AG04450 (cell line): ENCODE measurements at regions of chr18 and their contacts with region 1.

Region 1: DNA sequence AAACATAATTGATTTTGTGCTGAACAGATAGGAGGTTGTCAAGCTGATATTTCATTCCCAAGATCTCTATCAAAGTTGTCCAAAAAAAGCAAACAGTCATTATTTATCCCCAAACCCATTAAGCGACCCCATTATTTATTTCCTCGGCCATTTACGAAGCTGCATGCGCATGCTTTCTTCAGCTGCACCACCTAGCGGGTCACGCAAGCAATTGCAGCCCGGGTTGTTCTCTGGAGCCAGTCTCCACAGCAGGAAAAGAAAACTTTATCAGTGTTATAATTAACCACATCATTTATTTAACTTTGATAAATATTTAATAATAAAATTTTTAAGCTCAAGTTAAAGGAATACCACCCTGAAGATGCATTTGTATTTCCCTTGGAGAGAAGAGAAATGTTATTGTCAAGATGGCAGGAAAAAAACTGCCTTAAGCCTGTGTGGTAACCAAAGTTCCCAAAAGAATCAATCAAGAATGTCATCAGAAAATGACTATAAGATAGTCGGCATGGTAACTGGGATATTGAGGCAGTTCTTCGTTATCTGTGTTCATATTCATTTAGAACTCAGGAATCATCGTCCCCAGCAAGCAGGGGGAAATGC is 304.7 kb downstream of the FBXO15 start:
- DNase-seq: peak; percentile 23
- H3K4me3 ChIP-seq: no peak overlapping the region
- H3K27ac ChIP-seq: no peak overlapping the region
- H3K27me3 ChIP-seq: no peaks in the 10 kb centered on the region
- CTCF ChIP-seq: peak; percentile 99

Region 2: DNA sequence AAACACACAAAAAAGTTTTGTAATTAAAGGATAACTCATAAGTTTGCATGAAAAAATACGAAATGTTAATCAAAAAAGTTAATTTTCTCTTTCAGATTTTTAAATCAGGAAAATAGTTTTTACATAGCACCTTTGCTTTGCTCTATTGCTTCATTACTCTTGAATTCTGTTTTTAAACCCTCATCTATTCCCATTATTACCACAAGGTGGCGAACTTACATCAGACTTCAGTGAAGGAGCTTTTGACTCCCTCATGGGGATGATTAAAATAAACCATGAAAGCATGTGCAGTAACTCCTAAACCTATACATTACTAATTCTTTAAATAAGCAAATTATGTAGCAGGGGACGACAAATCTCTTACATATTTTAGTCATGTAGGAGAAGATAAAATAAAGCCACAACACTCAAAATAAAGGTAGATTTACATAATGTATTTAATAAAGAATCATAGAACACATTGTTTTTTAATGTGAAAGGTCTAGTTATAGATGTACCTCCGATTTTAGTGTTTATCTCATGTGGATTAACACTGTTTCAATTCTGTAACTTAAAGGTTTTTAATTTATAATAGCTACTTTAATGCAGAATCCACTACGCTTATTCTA is 1080.3 kb before region 1 on chr18:
- CTCF ChIA-PET with region 1: interaction called, 16 read pairs
- POLR2A ChIA-PET with region 1: no interaction called
- DNase-seq: peak; percentile 59
- H3K4me3 ChIP-seq: no peak overlapping the region
- H3K27ac ChIP-seq: no peak overlapping the region
- H3K27me3 ChIP-seq: no peaks in the 10 kb centered on the region
- CTCF ChIP-seq: peak; percentile 77

Region 3: DNA sequence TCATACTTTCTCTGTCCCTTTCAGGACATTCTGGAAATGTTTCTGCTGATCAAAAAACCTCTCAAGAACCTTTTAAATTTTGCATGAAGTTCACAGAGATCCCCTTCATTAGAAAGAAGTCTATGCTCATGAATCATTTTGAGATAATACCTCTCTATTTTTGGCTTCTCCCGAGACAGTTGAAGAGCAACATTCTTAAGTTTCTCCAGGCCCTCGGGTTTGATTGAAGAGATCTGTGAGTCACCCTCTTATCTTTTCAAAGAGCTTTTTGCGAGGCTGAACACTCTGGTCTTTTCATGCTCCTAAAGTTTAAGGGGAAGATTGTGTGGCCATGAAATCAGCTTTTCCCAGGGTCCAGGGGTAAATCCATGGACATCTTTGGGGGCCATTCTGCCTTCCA is 49.5 kb before region 1 on chr18:
- CTCF ChIA-PET with region 1: interaction called, 12 read pairs
- POLR2A ChIA-PET with region 1: no interaction called
- DNase-seq: peak; percentile 2
- H3K4me3 ChIP-seq: no peak overlapping the region
- H3K27ac ChIP-seq: no peak overlapping the region
- H3K27me3 ChIP-seq: no peaks in the 10 kb centered on the region
- CTCF ChIP-seq: no peak

Region 4: DNA sequence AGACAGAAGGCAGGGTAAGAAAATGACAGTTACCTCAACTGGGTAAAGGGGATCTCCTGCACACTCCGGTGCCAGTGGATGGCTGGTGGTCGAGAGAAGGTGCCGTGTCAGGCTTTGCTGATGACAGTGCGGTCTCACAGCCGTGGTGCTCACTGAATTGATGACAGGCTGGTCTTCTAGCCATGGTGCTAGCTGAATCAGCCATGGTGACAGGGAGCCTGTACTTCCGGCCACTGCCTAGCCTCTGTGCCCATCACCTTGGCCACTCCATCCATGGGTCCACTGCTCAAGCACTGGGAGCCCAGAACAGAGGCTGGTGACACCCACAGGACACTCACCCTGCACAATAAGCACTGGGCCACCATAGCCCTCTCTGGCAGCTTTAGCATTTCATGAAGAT is 11.2 kb before region 1 on chr18:
- CTCF ChIA-PET with region 1: interaction called, 19 read pairs
- POLR2A ChIA-PET with region 1: no interaction called
- DNase-seq: no peak
- H3K4me3 ChIP-seq: no peak overlapping the region
- H3K27ac ChIP-seq: no peak overlapping the region
- H3K27me3 ChIP-seq: no peaks in the 10 kb centered on the region
- CTCF ChIP-seq: no peak

Region 5: DNA sequence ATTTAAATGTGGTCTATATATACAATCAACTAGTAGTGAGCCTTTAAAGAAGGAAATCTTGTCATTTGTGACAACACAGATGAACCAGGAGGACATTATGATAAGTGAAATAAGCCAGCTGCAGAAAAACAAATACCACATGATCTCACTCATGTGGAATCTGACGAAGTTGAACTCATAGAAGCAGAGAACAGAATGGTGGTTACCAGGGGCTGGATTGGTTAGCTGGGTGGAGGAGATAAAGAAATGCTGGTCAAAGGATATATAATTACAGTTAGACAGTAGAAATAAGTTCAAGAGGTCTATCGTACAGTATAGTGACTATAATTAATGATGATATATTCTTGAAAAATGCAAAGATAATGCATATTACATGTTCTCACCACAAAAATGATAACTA is 36.9 kb after region 1 on chr18:
- CTCF ChIA-PET with region 1: interaction called, 11 read pairs
- POLR2A ChIA-PET with region 1: no interaction called
- DNase-seq: peak; percentile 16
- H3K4me3 ChIP-seq: no peak overlapping the region
- H3K27ac ChIP-seq: no peak overlapping the region
- H3K27me3 ChIP-seq: no peaks in the 10 kb centered on the region
- CTCF ChIP-seq: no peak

Region 6: DNA sequence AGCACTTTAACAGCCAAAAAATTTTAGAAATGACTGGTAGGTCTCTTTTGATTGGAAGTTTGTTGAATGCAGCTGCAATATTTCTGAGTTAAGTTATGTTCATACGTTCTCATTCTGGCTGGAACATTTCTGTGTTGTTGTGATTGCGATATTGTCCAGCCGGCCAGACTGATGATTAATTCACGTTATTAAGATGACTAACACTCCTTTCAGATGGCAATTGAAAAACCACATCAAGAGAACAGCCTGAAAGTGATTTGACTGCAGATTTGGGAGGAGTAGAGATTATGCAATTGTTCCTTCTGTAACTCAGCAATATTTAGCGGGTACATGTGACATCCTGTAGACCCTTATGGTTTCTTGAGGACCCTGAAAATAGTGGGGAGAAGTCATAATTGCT is 171.1 kb after region 1 on chr18:
- CTCF ChIA-PET with region 1: no interaction called
- POLR2A ChIA-PET with region 1: no interaction called
- DNase-seq: peak; percentile 18
- H3K4me3 ChIP-seq: no peak overlapping the region
- H3K27ac ChIP-seq: no peak overlapping the region
- H3K27me3 ChIP-seq: peaks cover 29% of the 10 kb centered on the region
- CTCF ChIP-seq: no peak

Region 7: DNA sequence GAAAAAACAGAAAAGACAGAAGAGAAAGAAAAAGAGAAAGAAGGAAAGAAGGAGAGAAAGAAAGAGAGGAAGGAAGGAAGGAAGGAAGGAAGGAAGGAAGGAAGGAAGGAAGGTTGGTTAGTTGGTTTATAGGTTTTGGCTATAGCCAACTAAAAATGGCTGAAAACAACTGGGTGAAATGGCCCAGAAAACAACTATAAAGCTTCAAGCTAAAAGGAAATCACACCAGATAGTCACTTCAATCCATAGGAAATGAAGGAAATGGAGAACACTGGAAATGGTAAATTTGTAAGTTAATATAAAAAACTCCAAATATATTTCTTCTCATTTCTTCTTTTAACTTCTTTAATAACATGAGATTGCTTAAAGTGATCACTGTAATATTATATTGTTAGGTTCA is 186.3 kb after region 1 on chr18:
- CTCF ChIA-PET with region 1: no interaction called
- POLR2A ChIA-PET with region 1: no interaction called
- DNase-seq: no peak
- H3K4me3 ChIP-seq: no peak overlapping the region
- H3K27ac ChIP-seq: no peak overlapping the region
- H3K27me3 ChIP-seq: peaks cover 4% of the 10 kb centered on the region
- CTCF ChIP-seq: no peak

Region 8: DNA sequence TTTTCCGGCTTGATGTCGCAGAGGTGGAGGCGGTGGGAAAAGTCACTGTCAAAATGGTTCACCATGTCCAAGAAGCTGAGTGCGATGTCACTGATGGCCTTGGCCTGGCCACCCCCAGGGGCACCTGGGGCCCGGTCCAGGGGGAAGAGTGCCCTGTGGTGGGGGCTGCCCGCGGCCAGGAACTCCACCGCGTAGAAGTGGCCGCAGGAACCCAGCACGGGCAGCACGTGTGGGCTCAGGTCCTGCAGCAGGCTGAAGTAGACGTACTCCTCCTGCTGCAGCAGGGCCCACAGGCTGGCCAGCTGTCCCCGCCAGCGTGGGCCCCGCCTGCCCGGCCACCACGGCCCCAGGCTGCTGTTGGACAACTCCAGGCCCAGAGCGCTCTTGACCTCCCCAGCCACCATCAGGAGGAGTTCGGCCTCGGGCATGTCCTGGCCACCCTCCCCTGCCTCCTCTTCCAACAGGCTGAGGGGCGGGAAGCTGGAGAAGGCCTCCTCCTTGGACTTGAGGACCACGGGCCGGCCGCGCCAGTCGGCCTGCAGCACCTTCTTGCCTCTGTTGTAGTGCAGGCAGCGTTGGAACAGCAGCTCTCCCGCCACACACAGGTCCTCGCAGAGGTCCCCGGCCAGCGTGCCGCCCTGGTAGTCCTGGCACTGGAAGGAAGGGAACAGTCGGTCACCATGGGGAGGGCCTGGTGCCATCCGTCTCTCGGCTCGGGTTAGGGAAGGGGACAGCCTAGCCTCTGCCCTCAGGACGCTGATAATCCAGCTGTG is 603.9 kb after region 1 on chr18:
- CTCF ChIA-PET with region 1: no interaction called
- POLR2A ChIA-PET with region 1: no interaction called
- DNase-seq: no peak
- H3K4me3 ChIP-seq: no peak overlapping the region
- H3K27ac ChIP-seq: no peak overlapping the region
- H3K27me3 ChIP-seq: peaks cover 9% of the 10 kb centered on the region
- CTCF ChIP-seq: no peak